ENCODE measurements at regions of chrX and their contacts with region 1.

Region 1: DNA sequence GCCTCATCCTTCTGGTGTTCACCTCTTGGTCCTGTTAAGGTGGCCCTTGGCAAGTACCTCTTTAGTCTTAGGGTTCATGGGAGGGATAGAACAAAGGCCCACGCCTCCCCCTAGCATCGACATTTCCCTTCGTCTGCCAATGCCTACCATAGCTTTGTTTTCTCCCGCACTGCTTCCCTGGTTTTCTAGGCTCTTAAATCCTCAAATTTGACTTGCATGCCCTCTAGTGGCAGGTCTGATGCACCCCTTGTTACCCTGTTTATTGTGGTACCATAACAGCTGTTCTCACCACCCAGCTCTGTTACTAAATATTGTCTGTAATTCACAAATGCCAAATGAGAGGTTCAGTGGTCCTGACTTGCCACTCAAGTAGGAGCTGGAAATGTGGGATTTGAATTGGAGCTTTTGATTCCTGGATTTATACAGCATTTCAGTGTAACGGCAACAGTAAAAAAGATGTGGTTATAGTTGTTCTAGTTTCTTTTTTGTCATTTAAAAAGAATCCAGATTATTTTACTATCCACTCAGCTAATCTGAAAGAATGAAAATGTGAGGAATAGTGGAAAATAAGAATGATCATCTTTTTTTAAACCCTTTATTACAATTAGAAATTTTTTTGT is 100.1 kb downstream of the REPS2 start:
- DNase-seq: peak; percentile 51 to 55
- H3K4me3 ChIP-seq: no peak overlapping the region
- H3K27ac ChIP-seq: no peak overlapping the region
- H3K4me1 ChIP-seq: no peaks in the 10 kb centered on the region
- H3K27me3 ChIP-seq: no peaks in the 10 kb centered on the region
- CTCF ChIP-seq: peak; percentile 82

Region 2: DNA sequence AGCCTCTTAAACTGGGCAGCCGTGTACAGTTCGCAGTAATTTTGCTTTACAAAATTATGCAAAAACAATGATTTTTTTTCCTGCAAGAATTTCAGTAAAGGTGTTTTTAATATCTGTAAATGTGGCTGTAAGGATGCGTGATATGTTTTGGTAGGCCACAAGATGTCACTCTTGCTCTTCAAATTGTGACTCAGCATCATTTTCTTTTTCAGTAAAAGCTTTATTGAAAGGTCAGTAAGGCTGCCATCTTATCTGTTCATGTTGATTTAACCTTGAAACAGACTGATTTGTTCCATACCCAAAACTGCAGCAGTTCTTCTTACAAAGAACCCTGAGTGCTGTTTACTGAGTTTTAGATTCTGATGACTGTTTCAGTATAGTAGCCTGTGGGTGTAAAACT is 220.4 kb before region 1 on chrX:
- CTCF ChIA-PET with region 1: interaction called, 5 read pairs
- POLR2A ChIA-PET with region 1: no interaction called
- intact Hi-C with region 1: loop called (anchors 1 kb)
- DNase-seq: peak in 1 of 2 experiments; percentile 46
- H3K4me3 ChIP-seq: no peak overlapping the region
- H3K27ac ChIP-seq: no peak overlapping the region
- H3K4me1 ChIP-seq: no peaks in the 10 kb centered on the region; the same call in 1 of the 2 replicates
- H3K27me3 ChIP-seq: no peaks in the 10 kb centered on the region
- CTCF ChIP-seq: peak; percentile 67

Region 3: GRCh38 chrX:16870095-16870860 is 176.3 kb before region 1 on chrX and contains the start of gene RBBP7:
- CTCF ChIA-PET with region 1: no interaction called
- POLR2A ChIA-PET with region 1: no interaction called
- intact Hi-C with region 1: loop called (anchors 5 kb)
- DNase-seq: peak; percentile 74 to 94
- H3K4me3 ChIP-seq: peak within 1 kb of the TSS; percentile 85
- H3K27ac ChIP-seq: peak within 1 kb of the TSS; percentile 78
- H3K4me1 ChIP-seq: peaks cover 21% of the 10 kb centered on the region
- H3K27me3 ChIP-seq: no peaks in the 10 kb centered on the region
- CTCF ChIP-seq: no peak
- total RNA-seq, gene RBBP7: 152 and 197 TPM in 2 replicates

Region 4: GRCh38 chrX:16882702-16883486 is 163.7 kb before region 1 on chrX:
- CTCF ChIA-PET with region 1: interaction called, 40 read pairs
- POLR2A ChIA-PET with region 1: interaction called, 3 read pairs
- intact Hi-C with region 1: loop called (anchors 1 kb)
- DNase-seq: peak; percentile 56 to 65
- H3K4me3 ChIP-seq: peak overlapping the region; percentile 70
- H3K27ac ChIP-seq: peak overlapping the region; percentile 71
- H3K4me1 ChIP-seq: 0 out of 2 replicates have a peak, but pooled peaks cover 4% of the 10 kb centered on the region
- H3K27me3 ChIP-seq: no peaks in the 10 kb centered on the region
- CTCF ChIP-seq: peak; percentile 83

Region 5: DNA sequence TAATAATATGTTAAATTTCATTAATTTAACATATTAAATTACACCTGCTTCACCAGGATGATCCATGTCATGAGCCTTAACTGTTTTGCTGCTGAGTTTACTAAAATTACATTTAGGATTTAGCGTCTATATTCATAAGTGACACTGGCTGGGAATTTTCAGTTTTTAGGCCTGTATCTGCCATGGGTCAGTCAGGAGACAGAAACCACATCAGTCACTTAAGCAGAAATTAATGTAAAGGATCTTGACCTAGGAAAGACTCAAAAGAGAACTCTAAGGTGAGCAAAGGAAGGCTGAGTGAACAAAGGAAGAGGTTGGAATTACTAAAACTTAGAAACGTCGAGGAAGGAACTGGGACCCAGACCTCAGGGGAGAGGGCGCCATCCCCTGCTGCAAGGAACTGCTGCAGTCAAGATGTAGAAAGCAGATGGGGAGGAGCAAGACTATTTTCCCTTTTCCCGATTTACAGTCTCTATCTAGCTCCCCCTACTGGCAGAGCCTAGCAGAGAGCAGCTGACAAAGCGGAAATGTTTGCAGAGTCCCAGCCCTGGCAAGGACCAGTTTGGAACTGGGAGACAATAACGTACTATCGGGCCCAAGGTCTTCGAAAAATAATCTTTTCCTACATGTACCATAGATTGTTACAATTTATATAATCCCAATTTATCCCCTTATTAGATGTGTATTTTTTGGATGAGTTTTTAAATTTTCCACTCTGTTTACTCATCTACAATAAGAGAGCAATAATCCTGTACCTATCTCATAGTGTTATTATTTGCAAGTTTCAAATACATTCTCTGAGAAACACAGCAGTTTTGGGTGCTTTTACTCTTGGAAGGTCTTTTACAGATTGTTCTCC is 153.9 kb before region 1 on chrX:
- CTCF ChIA-PET with region 1: interaction called, 10 read pairs
- POLR2A ChIA-PET with region 1: no interaction called
- intact Hi-C with region 1: no loop called
- DNase-seq: peak; percentile 43 to 54
- H3K4me3 ChIP-seq: no peak overlapping the region
- H3K27ac ChIP-seq: no peak overlapping the region
- H3K4me1 ChIP-seq: no peaks in the 10 kb centered on the region
- H3K27me3 ChIP-seq: no peaks in the 10 kb centered on the region
- CTCF ChIP-seq: peak; percentile 80

Region 6: DNA sequence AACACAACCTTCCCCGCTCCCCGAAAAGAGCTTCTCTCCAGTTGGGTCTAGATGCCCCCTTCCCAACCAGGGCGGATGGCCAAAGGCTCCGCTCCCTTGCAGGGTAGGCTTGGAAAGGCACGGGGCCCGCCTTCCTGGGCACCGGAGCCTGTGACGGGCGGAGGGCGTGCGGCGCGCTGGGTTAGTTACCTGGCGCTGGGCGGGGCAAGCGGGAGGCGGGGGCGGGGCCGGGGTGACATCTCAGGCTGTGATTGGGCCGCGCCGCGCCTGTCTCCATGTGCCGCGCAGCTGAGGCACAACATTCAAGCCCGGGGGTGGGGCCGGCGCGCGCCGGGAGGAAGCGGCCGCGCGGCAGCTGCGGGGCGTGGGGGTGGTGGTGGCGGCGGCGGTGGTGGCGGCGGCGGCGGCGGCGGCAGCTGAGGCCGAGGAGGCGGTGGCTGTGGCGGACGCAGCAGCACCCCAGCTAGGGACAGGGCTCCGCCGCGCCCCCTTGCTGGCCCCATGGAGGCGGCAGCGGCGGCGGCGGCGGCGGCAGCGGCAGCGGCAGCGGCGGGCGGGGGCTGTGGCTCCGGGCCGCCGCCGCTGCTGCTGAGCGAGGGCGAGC is 100.1 kb before region 1 on chrX and contains the start of gene REPS2:
- CTCF ChIA-PET with region 1: interaction called, 3 read pairs
- POLR2A ChIA-PET with region 1: no interaction called
- intact Hi-C with region 1: loop called (anchors 5 kb)
- DNase-seq: peak; percentile 77 to 83
- H3K4me3 ChIP-seq: peak within 1 kb of the TSS; percentile 66
- H3K27ac ChIP-seq: no peak within 1 kb of the TSS
- H3K4me1 ChIP-seq: peaks cover 26% of the 10 kb centered on the region; the same call in 1 of the 2 replicates
- H3K27me3 ChIP-seq: no peaks in the 10 kb centered on the region
- CTCF ChIP-seq: no peak
- total RNA-seq, gene REPS2: 15.4 and 29.2 TPM in 2 replicates

Measured in PC-9 (cell line).